ENCODE measurements at regions of chr2 and their contacts with region 1.

Region 1: DNA sequence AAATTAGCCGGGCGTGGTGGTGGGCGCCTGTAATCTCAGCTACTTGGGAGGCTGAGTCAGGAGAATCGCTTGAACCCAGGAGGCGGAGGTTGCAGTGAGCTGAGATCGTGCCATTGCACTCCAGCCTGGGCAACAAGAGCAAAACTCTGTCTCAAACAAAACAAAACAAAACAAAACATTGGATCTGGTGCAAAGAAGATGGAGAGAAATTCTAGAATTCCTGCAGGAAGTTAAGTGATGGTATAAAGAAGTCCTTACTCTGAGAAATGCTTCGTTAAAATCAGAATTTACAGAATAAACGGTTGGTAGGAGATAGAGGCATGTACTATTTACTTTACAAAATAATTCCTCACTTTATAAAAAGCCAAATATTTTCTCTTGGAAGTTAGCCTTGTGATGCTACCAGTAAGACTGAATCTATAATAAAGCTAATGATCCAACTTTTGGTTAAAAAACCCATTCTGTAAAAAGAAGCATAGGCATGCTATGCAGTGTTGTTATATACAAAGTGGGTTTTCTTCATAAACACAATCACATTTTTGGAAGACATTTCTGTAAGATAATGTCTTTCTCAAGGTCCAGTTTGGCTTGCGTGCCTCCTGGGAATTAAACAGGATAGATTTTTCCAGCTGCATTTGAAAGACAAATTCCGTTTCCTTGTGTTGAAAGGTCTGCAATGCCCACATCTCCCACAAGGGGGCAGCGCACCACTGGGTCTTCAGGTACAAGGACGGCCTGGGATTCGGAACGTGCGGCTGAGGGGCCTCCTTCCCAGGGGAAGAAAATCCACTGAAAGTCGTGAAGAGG is 35.6 kb upstream of the PNO1 start:
- DNase-seq: peak; percentile 78
- H3K4me3 ChIP-seq: peak overlapping the region; percentile 45
- H3K27ac ChIP-seq: no peak overlapping the region
- H3K4me1 ChIP-seq: peaks cover 6% of the 10 kb centered on the region
- H3K27me3 ChIP-seq: no peaks in the 10 kb centered on the region

Region 2: DNA sequence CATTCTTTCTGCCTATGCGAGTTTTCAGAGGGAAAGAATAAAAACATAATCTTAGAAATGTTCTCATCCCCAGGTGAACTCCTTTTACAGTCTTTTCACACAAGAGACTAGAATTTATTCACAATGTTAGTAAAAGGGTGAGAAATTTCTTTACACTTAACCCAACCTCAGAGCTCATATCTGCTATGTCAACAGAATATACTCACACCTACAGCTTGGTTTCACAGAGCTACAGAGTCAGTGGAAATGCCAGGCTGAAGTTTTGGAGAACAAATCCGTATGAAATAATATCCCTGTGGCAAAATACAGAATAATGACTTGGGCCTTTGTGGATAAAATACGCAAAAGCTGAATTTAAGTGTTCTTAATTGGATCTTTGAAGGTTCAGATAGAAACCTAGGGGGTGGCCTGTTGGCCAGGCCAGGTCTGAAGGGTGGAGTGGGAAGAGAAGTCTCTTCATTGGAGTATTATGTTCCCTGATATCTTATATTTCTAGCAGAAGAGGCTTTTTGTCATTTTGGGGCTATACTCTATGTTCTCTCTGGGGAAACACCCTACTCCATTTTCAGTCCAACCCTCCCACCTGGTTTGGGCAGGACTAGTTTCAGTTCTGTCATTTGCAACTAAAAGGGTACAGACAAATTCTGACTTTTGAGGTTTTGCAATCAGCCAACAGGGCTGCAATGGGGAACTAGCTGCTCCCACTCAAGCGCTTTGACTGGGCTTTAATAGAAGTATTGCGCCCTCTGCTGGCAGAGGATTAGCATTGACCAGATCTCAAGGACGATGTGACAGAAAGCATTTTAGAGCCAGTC is 319.3 kb after region 1 on chr2:
- in situ Hi-C with region 1: loop called (anchors 10 kb)
- DNase-seq: peak; percentile 93
- H3K4me3 ChIP-seq: no peak overlapping the region
- H3K27ac ChIP-seq: no peak overlapping the region
- H3K4me1 ChIP-seq: no peaks in the 10 kb centered on the region
- H3K27me3 ChIP-seq: 0 out of 2 replicates have a peak, but pooled peaks cover 9% of the 10 kb centered on the region

Region 3: DNA sequence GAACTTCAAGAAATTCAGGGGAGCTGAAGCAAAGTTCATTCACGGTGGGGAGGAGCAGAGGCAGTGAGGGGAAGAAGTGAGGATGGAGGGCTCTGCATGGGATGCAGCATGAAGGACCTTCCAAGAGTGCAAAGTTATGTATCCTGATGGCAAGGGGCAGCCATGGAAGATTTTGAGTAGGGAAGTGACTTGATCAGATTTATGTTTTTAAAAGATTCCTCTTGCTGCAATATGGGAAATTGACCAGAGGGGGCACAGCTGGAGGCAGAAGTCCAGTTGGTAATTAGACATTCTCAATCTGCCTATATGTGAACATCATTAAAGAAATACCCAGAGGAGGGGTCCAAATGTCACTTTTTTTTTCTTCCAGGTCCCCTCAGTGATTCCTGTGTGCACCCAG is 1598.3 kb after region 1 on chr2:
- in situ Hi-C with region 1: no loop called
- DNase-seq: peak; percentile 43
- H3K4me3 ChIP-seq: no peak overlapping the region
- H3K27ac ChIP-seq: no peak overlapping the region
- H3K4me1 ChIP-seq: peaks cover 9% of the 10 kb centered on the region
- H3K27me3 ChIP-seq: no peaks in the 10 kb centered on the region

Measured in GM23248 (cell line).